ENCODE measurements at regions of chr7 and their contacts with region 1.

Region 1: GRCh38 chr7:64463636-64464378 is 99.1 kb downstream of the ZNF680 start:
- DNase-seq: no peak
- ATAC-seq: no peak
- H3K4me3 ChIP-seq: peak overlapping the region in 1 of 2 experiments; percentile 30; a peak in 1 of 4 replicates
- H3K27ac ChIP-seq: no peak overlapping the region
- H3K4me1 ChIP-seq: no peaks in the 10 kb centered on the region
- H3K27me3 ChIP-seq: no peaks in the 10 kb centered on the region
- CTCF ChIP-seq: no peak

Region 2: DNA sequence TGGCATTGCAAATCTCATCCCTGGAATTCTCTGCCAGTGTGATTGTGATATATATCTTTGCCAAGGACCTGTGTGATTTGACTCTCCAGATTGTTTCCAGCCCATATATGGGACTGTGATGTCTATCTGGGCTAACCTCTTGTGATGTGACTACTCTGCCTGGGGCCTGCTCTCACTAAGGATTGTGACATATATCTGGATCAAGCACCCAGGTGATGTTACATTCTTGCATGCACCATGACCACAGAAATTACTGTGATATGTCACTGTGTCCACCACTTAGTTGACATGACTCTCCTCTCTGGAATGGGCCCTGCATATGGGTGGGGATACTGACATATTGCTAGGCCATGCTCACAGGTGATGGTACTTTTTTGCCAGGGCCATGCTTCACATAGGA is 63.4 kb before region 1 on chr7:
- CTCF ChIA-PET with region 1: no interaction called
- POLR2A ChIA-PET with region 1: no interaction called
- in situ Hi-C with region 1: no loop called
- intact Hi-C with region 1: loop called (anchors 10 kb)
- DNase-seq: no peak
- ATAC-seq: no peak
- H3K4me3 ChIP-seq: no peak overlapping the region
- H3K27ac ChIP-seq: no peak overlapping the region
- H3K4me1 ChIP-seq: no peaks in the 10 kb centered on the region
- H3K27me3 ChIP-seq: no peaks in the 10 kb centered on the region
- CTCF ChIP-seq: no peak

Region 3: GRCh38 chr7:64485623-64486022 is 21.8 kb after region 1 on chr7:
- CTCF ChIA-PET with region 1: no interaction called
- POLR2A ChIA-PET with region 1: interaction called, 10 read pairs
- in situ Hi-C with region 1: no loop called
- intact Hi-C with region 1: no loop called
- DNase-seq: no peak
- ATAC-seq: no peak
- H3K4me3 ChIP-seq: no peak overlapping the region
- H3K27ac ChIP-seq: no peak overlapping the region
- H3K4me1 ChIP-seq: no peaks in the 10 kb centered on the region
- H3K27me3 ChIP-seq: no peaks in the 10 kb centered on the region
- CTCF ChIP-seq: no peak

Region 4: DNA sequence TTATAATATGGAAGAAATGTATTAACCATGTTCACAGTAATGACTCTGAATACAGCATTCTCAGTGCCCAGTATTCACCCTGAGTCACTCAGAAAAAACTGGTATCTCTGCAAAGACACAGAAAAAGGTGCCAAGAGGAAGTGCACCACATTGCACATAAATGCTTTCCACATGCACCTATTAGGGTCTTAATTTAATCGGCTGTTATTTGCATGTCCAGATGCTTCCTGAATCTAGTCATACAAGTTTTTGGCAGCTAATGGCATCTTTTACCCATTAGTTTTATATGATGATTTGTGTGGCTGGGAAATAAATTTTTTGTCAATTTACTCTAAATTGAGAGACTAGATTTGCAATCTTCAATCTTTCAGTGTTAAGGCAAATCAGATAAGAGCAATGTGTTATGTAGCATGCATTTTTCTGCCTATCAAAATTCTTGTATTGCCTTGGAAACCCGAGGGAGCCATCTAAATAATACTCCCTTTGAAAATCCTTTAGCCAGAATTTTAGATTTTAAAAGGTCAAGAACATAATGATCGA is 40.8 kb after region 1 on chr7:
- CTCF ChIA-PET with region 1: no interaction called
- POLR2A ChIA-PET with region 1: no interaction called
- in situ Hi-C with region 1: no loop called
- intact Hi-C with region 1: no loop called
- DNase-seq: no peak
- ATAC-seq: no peak
- H3K4me3 ChIP-seq: no peak overlapping the region
- H3K27ac ChIP-seq: no peak overlapping the region
- H3K4me1 ChIP-seq: no peaks in the 10 kb centered on the region
- H3K27me3 ChIP-seq: no peaks in the 10 kb centered on the region
- CTCF ChIP-seq: no peak

Region 5: DNA sequence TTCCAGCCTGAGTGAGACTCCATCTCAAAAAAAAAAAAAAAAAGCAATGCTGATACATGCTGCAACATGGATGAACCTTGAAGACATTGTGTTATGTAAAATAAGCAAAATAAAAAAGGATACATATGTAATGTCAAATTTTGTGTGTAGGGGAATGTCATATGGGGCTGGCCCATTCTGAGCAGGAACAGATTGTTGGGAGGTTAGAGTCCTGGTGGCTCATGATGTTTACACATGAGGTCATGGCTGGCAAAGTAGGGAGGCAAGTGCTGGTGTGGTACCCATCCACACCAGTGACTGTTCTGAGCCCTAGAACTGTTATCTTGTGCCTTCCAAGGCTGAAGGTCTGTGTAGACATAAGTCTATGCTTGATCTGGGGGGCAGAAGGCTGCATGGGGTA is 947.4 kb after region 1 on chr7:
- CTCF ChIA-PET with region 1: no interaction called
- POLR2A ChIA-PET with region 1: no interaction called
- in situ Hi-C with region 1: no loop called
- intact Hi-C with region 1: no loop called
- DNase-seq: no peak
- ATAC-seq: no peak
- H3K4me3 ChIP-seq: no peak overlapping the region
- H3K27ac ChIP-seq: no peak overlapping the region
- H3K4me1 ChIP-seq: no peaks in the 10 kb centered on the region
- H3K27me3 ChIP-seq: peaks cover 3% of the 10 kb centered on the region
- CTCF ChIP-seq: no peak